ENCODE measurements at regions of chr12 and their contacts with region 1.

Region 1: GRCh38 chr12:113285679-113286610 is 49.0 kb downstream of the SLC8B1 start:
- DNase-seq: no peak
- ATAC-seq: peak; percentile 67

Region 2: GRCh38 chr12:113135178-113136127 is 150.5 kb before region 1 on chr12 and contains the start of gene RASAL1:
- intact Hi-C with region 1: no loop called
- DNase-seq: no peak
- ATAC-seq: peak; percentile 8
- total RNA-seq, gene RASAL1: 8.6 TPM

Region 3: GRCh38 chr12:113794774-113795173 is 508.8 kb after region 1 on chr12:
- intact Hi-C with region 1: loop called (anchors 10 kb)
- DNase-seq: no peak
- ATAC-seq: no peak

Measured in sciatic nerve (tissue), 2 donors.